Activated CD4-positive, alpha-beta memory T cell treated with anti-CD3 and anti-CD28 coated beads for 36 hours (primary cell): ENCODE measurements at regions of chr16 and their contacts with region 1.

Region 1: GRCh38 chr16:87636072-87636684 is 33.9 kb downstream of the JPH3 start:
- DNase-seq: peak; percentile 91
- H3K4me3 Mint-ChIP-seq: peak overlapping the region; percentile 68
- H3K27ac Mint-ChIP-seq: no peak overlapping the region
- H3K4me1 Mint-ChIP-seq: peaks cover 11% of the 10 kb centered on the region
- H3K27me3 Mint-ChIP-seq: peaks cover 4% of the 10 kb centered on the region

Region 2: DNA sequence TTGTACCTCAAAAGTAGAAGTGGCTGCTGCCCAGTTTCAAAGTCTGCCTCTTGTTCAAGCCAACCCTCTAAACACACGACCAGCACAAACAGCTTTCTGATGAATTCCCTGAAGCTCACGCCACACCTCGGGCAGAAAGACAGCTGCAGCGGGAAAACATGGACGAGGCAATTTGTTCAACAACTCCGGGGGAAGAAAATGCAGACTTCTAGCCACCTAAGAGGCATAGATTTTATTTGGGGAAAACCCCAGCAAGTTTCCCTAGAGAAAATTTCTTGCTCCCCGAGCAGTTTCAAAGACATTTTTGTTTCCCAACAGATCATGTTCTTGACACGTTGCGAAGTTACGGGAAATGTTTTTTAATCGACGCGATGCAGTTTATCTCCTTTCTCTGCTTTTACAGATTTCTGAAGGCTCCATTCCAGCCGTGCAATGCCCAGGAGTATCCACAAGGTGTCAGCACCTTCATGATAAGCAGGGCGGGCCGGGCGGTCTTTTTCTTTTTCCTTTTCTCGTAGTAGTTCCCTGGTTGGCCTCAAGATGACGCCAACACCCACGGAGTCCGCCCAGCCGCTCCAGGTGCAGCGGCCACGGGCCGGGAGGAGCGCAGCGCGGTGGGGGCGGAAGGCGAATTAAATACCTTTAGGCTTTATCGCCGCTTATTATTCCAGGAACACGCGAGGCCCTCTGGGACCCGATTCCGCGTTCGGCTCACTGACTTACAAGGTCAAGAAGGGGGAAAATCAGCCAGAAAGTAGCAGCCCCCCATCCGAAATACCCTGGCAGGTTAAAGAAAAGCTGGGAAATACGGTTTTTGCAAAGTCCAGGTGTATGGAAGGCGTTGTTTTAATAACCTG is 1072.5 kb before region 1 on chr16:
- CTCF ChIA-PET with region 1: interaction called, 15 read pairs
- POLR2A ChIA-PET with region 1: no interaction called
- intact Hi-C with region 1: loop called (anchors 10 kb)
- DNase-seq: peak; percentile 91
- H3K4me3 Mint-ChIP-seq: no peak overlapping the region
- H3K27ac Mint-ChIP-seq: peak overlapping the region; percentile 23
- H3K4me1 Mint-ChIP-seq: peaks cover 11% of the 10 kb centered on the region
- H3K27me3 Mint-ChIP-seq: peaks cover 48% of the 10 kb centered on the region

Region 3: GRCh38 chr16:87324411-87325275 is 311.5 kb before region 1 on chr16:
- CTCF ChIA-PET with region 1: interaction called, 4 read pairs
- POLR2A ChIA-PET with region 1: no interaction called
- intact Hi-C with region 1: loop called (anchors 2 kb)
- DNase-seq: peak; percentile 48
- H3K4me3 Mint-ChIP-seq: no peak overlapping the region
- H3K27ac Mint-ChIP-seq: no peak overlapping the region
- H3K4me1 Mint-ChIP-seq: no peaks in the 10 kb centered on the region
- H3K27me3 Mint-ChIP-seq: no peaks in the 10 kb centered on the region

Region 4: GRCh38 chr16:87416826-87417527 is 219.2 kb before region 1 on chr16:
- CTCF ChIA-PET with region 1: interaction called, 73 read pairs
- POLR2A ChIA-PET with region 1: no interaction called
- intact Hi-C with region 1: loop called (anchors 1 kb)
- DNase-seq: peak; percentile 49
- H3K4me3 Mint-ChIP-seq: no peak overlapping the region
- H3K27ac Mint-ChIP-seq: no peak overlapping the region
- H3K4me1 Mint-ChIP-seq: no peaks in the 10 kb centered on the region
- H3K27me3 Mint-ChIP-seq: no peaks in the 10 kb centered on the region

Region 5: DNA sequence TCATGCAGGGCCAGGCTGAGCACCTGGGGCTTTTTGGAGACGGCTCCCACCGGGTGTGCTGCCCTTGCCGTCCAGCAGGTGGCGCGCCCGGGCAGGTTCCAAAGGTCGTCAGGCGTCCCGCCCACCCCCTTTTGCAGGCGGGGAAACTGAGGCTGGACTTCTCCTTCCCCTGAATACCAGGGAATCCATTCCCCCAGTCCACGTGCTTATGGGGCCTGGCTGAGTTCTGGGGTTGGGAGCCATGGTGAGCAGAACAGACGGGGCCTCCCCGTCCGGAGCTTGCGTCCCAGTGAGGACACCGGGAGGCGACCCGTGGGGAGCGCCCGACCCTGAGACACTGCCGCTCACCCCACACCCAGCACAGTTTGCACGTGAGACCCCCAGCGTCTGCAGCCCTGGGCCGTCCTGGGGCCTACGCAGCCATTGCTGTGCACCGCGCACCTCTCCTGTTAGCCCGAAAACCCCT is 85.6 kb before region 1 on chr16:
- CTCF ChIA-PET with region 1: interaction called, 28 read pairs
- POLR2A ChIA-PET with region 1: no interaction called
- intact Hi-C with region 1: loop called (anchors 2 kb)
- DNase-seq: peak; percentile 69
- H3K4me3 Mint-ChIP-seq: no peak overlapping the region
- H3K27ac Mint-ChIP-seq: no peak overlapping the region
- H3K4me1 Mint-ChIP-seq: no peaks in the 10 kb centered on the region
- H3K27me3 Mint-ChIP-seq: peaks cover 11% of the 10 kb centered on the region

Region 6: DNA sequence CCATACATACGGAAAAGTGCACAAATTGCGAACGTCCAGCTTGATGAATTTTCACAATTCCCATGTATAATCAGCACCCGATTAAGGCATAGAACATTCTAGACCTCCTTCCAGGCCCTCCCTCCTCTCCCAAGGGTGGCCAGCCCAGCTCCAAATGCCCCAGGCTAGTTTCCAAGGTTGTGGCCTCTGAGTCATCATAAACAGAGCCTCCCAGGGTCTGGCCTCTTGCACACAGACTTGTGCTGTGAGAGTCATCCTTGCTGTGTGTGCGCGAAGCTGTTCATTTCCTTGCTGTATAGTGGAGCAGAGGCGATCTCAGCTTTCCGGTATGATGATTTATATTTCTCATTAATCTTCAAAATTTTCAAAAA is 54.4 kb before region 1 on chr16:
- CTCF ChIA-PET with region 1: interaction called, 57 read pairs
- POLR2A ChIA-PET with region 1: no interaction called
- intact Hi-C with region 1: no loop called
- DNase-seq: no peak
- H3K4me3 Mint-ChIP-seq: no peak overlapping the region
- H3K27ac Mint-ChIP-seq: no peak overlapping the region
- H3K4me1 Mint-ChIP-seq: no peaks in the 10 kb centered on the region
- H3K27me3 Mint-ChIP-seq: peaks cover 18% of the 10 kb centered on the region

Region 7: GRCh38 chr16:87653234-87653633 is 17.1 kb after region 1 on chr16:
- CTCF ChIA-PET with region 1: interaction called, 14 read pairs
- POLR2A ChIA-PET with region 1: no interaction called
- intact Hi-C with region 1: no loop called
- DNase-seq: no peak
- H3K4me3 Mint-ChIP-seq: no peak overlapping the region
- H3K27ac Mint-ChIP-seq: no peak overlapping the region
- H3K4me1 Mint-ChIP-seq: no peaks in the 10 kb centered on the region
- H3K27me3 Mint-ChIP-seq: no peaks in the 10 kb centered on the region

Region 8: DNA sequence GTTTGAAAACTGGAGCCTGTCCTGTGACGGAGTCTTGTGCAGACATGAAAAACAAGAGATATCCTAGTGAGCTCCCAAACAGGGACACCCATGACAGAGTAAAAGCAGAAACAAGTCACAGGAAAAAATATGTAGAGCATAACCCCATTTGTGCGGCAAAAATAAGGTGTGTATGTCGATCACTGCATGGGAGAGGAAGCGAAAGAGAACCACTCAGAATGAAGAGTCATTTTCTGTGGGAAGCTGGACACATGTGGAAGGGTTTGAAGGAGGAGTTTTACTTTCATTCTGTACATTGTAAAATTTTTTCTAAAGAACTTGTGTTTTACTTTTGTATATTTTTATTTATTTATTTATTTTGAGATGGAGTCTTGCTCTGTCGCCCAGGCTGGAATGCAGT is 38.2 kb after region 1 on chr16:
- CTCF ChIA-PET with region 1: no interaction called
- POLR2A ChIA-PET with region 1: no interaction called
- intact Hi-C with region 1: no loop called
- DNase-seq: no peak
- H3K4me3 Mint-ChIP-seq: no peak overlapping the region
- H3K27ac Mint-ChIP-seq: no peak overlapping the region
- H3K4me1 Mint-ChIP-seq: no peaks in the 10 kb centered on the region
- H3K27me3 Mint-ChIP-seq: no peaks in the 10 kb centered on the region